ENCODE measurements at regions of chr11 and their contacts with region 1.

Region 1: GRCh38 chr11:65802841-65803240 is 16.0 kb downstream of the OVOL1 start:
- DNase-seq: no peak
- H3K4me3 Mint-ChIP-seq: no peak overlapping the region
- H3K27ac Mint-ChIP-seq: no peak overlapping the region
- H3K4me1 Mint-ChIP-seq: peaks cover 4% of the 10 kb centered on the region
- H3K27me3 Mint-ChIP-seq: peaks cover 28% of the 10 kb centered on the region

Region 2: GRCh38 chr11:66868726-66869566 is 1066.1 kb after region 1 on chr11:
- intact Hi-C with region 1: loop called (anchors 10 kb)
- DNase-seq: peak; percentile 93
- H3K4me3 Mint-ChIP-seq: no peak overlapping the region
- H3K27ac Mint-ChIP-seq: no peak overlapping the region
- H3K4me1 Mint-ChIP-seq: peaks cover 6% of the 10 kb centered on the region
- H3K27me3 Mint-ChIP-seq: no peaks in the 10 kb centered on the region

Measured in activated CD4-positive, alpha-beta T cell treated with anti-CD3 and anti-CD28 coated beads, Interleukin-2, amount 10 ng/mL, durations not matched to agents 24 days and 14 days (primary cell).